ENCODE measurements at regions of chr9 and their contacts with region 1.

Region 1: DNA sequence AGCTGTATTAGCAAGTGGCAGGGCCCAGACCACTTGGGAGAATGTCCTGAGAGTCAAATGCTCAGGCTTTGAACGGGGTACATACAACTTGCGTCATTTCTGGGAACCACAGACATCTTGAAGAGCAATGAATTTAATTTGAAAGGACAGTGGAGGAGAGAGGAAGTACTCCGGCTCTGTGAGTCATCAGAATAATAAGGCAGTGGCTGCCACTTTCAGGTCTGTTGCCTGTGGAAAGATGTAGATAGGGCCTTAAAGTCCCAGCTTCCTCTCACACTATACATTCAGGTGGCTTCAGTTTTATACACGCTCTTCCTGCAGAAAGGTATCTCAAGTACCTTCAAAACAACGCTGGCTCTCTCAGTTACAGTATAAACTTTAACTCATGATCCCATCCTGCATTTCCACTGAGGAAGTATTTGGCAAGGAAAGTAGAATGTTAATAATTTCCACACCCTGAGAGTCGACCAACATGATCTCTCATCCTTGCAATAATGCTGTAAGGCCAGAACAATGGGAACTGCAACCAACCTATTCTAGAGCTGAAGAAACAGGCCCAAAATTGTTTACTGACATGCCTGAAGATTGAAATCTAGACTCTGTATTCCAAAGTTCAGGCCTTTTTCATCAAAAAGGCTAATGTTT is 6.8 kb upstream of the PRUNE2 start:
- DNase-seq: no peak

Region 2: DNA sequence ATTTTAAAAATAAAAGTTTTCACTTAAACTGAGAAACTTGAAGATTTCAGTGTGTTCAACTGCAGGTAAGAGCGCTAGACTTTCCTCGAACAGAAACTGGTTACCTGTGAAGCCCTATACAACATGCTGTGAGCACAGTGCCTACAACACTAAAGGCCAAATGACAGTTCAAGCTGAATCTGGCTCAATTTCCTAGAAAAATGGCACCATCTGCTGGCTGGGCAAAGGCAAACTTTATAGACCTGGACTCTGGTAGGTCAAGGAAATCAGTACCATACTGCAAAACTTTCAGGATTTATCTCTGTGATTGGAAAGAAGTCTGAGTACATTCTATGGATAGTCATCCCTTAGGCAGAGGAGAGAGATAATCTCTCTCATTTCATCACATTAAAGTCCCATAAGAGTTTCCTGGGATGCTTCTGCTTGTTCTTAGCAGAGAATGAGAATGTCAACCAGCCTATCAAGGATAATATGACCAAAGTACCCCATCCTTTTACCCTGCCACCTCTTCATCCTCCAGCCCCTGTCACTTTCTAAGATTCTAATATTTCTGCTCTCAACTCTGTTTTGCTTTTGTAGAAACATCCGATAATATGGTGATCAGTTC is 74.9 kb after region 1 on chr9:
- intact Hi-C with region 1: loop called in 1 of 2 experiments (anchors 10 kb)
- DNase-seq: no peak

Measured in posterior vena cava (tissue), 2 donors.